Ascending aorta (tissue), 2 donors: ENCODE measurements at regions of chr18 and their contacts with region 1.

Region 1: DNA sequence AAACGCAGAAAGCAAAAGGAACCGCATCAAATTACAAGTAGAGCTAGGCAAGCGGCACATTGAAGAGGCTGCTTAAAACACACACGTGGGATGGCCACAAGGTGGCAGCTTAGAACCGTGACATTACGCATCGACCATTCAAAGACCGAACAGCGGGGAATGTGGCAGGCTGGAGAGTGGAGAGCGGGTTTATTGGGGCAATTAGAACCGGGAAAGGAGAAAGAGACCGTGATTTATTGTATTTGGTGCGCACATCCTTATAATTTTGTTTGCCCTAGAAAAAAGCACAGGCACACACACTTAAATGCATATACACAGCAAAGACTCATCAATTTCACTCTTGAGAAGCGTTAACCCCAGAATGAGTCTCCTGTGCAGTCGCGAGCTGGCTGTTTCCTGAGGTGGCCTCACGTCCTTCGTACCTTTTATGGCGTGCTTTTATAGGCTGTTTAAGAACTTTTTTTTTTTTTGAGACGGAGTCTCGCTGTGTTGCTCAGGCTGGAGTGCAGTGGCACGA is 31.7 kb upstream of the MEP1B start:
- DNase-seq: peak in 1 of 2 donors; percentile 87
- H3K4me3 ChIP-seq: peak overlapping the region; percentile 24 to 55
- H3K27ac ChIP-seq: no peak overlapping the region
- H3K4me1 ChIP-seq: no peaks in the 10 kb centered on the region
- H3K27me3 ChIP-seq: no peaks in the 10 kb centered on the region
- CTCF ChIP-seq: peak; percentile 81 to 92 (median 83)

Region 2: DNA sequence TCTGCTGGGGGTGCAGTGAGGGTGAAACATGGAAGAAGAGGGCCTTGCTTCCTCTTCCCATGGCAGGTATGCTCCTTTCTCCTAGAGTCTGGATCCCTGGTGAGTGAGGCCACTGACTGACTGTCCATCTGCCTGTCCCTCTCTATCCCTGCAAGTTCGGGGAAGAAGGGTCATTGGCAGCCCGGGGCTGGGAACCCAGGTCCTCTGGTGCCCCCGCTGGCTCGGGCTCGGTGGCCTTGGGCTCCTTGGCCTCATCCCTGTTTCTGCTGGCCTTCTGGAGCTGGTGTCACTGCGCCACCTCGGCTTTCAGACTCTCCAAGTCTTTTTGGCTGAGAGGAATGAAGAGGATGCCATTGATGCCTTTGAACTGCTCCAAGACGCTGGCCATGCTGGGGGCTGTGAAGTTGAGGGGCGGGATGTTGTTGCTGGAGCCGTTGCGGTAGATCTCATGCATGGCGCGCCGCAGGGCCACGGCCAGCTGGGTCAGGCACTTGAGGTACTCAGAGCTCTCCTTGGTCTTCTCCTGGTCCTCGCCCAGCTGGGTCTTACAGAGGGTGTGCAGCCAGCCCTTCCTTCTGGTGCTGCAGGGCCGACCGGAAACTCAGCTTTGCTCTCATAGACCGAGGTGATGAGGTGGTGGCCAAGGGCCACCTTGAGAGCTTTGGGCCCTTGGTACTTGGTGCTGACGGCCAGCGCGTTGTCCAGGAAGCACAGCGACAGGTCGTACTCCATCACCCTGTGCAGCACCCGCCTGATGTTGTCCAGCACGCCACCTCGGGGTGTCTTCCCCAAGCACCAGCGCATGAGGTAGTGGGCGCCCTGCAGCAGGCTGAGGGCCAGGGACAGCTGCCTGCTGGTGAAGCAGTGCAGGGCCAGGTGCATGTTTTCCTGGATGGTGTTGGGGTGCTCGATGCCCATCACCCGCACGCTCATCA is 38.0 kb after region 1 on chr18:
- intact Hi-C with region 1: no loop called
- DNase-seq: no peak
- H3K4me3 ChIP-seq: no peak overlapping the region
- H3K27ac ChIP-seq: no peak overlapping the region
- H3K4me1 ChIP-seq: no peaks in the 10 kb centered on the region
- H3K27me3 ChIP-seq: no peaks in the 10 kb centered on the region
- CTCF ChIP-seq: no peak

Region 3: DNA sequence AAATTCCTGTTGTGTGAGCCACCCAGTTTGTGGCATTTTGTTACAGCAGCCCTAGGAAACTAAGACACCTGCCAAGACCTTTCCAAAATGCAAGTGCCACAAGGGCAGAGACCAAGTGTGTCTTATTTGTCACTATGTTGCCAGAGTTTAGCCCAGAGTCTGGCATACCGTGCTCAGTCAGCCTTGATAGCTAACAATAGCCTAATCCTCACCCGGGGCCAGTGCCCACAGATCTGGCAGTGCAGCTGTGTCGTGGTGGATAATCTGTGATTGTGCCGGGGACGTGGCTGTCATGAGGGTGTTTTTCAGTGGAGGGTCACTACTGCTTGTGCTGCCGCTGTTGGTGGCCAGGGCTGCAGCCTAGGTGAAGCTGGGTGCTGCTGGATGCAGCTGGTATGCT is 85.2 kb after region 1 on chr18:
- intact Hi-C with region 1: no loop called
- DNase-seq: no peak
- H3K4me3 ChIP-seq: no peak overlapping the region
- H3K27ac ChIP-seq: no peak overlapping the region
- H3K4me1 ChIP-seq: no peaks in the 10 kb centered on the region
- H3K27me3 ChIP-seq: no peaks in the 10 kb centered on the region
- CTCF ChIP-seq: no peak

Region 4: DNA sequence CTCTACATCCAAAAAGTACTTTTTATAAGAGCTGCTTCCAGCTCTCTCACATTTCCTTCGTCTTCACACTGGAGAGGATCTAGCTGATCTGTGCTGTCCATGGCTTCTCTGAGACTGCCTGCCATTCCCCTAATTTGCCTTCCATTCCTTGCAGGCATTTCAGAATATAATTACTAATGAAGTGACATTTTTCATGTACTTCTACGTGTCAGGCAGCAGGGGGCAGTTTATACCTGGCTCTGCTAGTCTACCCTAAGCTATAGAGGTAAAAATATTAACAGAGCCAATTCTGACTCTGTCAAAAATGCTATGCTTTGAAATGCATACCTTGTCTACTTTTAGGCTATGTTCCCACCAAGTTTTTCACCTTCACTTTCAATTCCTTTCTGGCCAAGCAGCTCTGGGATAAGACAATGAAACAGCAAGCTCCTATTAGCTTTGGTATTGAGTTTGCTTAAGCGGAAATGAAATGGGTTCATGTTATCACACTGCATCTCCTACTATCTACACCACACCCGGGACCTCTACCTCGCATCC is 113.6 kb after region 1 on chr18:
- intact Hi-C with region 1: loop called (anchors 5 kb)
- DNase-seq: no peak
- H3K4me3 ChIP-seq: no peak overlapping the region
- H3K27ac ChIP-seq: no peak overlapping the region
- H3K4me1 ChIP-seq: peaks cover 0 to 9% of the 10 kb centered on the region in 2 donors
- H3K27me3 ChIP-seq: no peaks in the 10 kb centered on the region
- CTCF ChIP-seq: peak; percentile 60 to 72 (median 61)

Region 5: GRCh38 chr18:32552421-32553030 is 394.4 kb after region 1 on chr18:
- intact Hi-C with region 1: loop called (anchors 1 kb)
- DNase-seq: no peak
- H3K4me3 ChIP-seq: no peak overlapping the region
- H3K27ac ChIP-seq: no peak overlapping the region
- H3K4me1 ChIP-seq: no peaks in the 10 kb centered on the region
- H3K27me3 ChIP-seq: no peaks in the 10 kb centered on the region
- CTCF ChIP-seq: peak; percentile 47 to 68 (median 56)